Mammary epithelial cell (primary cell): ENCODE measurements at regions of chr5 and their contacts with region 1.

Region 1: DNA sequence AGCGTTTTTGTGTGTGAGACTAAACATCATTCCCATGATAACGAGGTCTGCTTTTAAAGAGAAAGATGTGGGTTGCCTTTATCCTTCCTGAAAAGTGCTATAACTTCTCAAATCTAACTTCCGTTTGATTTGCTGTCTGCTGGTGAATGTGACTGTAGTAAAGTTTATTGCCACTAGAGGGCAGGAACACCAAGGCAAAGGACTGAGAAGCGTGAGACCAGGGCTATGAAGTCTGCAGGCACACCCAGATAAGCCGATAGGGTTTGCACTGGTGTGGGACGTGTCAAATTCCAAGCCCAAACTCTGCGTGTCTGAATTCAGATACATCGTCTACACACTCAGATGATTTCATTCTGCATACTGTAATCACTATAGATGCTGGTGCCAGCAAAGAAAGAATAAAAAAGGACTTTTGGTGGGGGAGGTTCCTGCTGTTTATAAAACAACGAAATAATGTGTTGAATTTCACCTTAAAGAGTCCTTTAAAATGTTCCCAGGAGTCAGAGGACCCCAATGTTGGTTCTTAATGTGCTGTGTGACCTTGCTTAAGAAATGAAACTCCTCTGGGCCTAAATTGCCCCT is 87.2 kb downstream of the PTTG1 start:
- DNase-seq: peak; percentile 71
- H3K4me3 ChIP-seq: no peak overlapping the region
- H3K27ac ChIP-seq: no peak overlapping the region
- H3K4me1 ChIP-seq: peaks cover 8% of the 10 kb centered on the region
- H3K27me3 ChIP-seq: no peaks in the 10 kb centered on the region
- CTCF ChIP-seq: peak; percentile 66 to 77

Region 2: GRCh38 chr5:160001457-160001856 is 507.4 kb before region 1 on chr5:
- CTCF ChIA-PET with region 1: no interaction called
- dilution Hi-C with region 1: no loop called
- in situ Hi-C with region 1: no loop called
- intact Hi-C with region 1: no loop called
- DNase-seq: no peak
- H3K4me3 ChIP-seq: no peak overlapping the region
- H3K27ac ChIP-seq: no peak overlapping the region
- H3K4me1 ChIP-seq: no peaks in the 10 kb centered on the region
- H3K27me3 ChIP-seq: peaks cover 3% of the 10 kb centered on the region
- CTCF ChIP-seq: no peak

Region 3: DNA sequence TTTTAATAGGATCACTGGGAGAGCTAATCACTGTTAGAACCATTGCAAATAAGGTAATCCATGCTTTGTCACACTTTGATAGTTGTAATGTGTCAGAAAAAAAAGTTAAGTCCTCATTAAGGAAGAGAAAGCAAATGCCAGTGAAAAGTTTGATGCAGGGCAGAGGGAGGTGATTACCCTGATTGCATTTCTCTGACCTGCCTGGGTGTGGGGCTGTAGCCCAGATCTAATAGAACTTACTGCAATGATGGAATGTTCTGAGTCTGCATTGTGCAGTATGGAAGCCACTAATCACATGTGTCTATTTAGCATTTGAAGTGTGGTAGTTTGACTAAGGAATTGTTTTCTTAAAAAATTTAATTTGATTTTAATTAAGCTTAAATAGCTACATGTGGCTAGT is 140.4 kb after region 1 on chr5:
- CTCF ChIA-PET with region 1: no interaction called
- dilution Hi-C with region 1: no loop called
- in situ Hi-C with region 1: no loop called
- intact Hi-C with region 1: loop called (anchors 10 kb)
- DNase-seq: peak; percentile 16
- H3K4me3 ChIP-seq: no peak overlapping the region
- H3K27ac ChIP-seq: no peak overlapping the region
- H3K4me1 ChIP-seq: no peaks in the 10 kb centered on the region
- H3K27me3 ChIP-seq: no peaks in the 10 kb centered on the region
- CTCF ChIP-seq: peak; percentile 44 to 58

Region 4: DNA sequence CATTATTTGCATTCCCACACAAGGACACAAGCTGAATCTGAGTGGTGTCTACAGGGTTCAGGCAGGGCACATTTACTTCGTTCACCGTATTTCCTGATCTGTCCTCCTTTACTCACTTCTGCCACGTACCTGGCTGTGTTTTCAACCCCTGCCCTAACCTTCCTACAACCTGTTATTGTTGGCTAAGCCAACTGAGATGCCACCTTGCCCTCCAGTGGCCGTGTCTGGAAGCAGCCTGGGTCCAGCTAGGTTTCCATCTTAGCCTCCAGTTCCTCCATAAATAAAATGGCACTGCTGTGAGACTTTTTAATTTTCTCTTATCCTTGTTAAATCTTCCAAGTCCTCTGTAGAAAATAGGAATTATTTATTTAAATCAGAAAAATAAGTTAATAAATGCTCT is 278.4 kb after region 1 on chr5:
- CTCF ChIA-PET with region 1: no interaction called
- dilution Hi-C with region 1: no loop called
- in situ Hi-C with region 1: loop called (anchors 10 to 25 kb)
- intact Hi-C with region 1: loop called (anchors 1 kb)
- DNase-seq: peak; percentile 40
- H3K4me3 ChIP-seq: no peak overlapping the region
- H3K27ac ChIP-seq: no peak overlapping the region
- H3K4me1 ChIP-seq: no peaks in the 10 kb centered on the region
- H3K27me3 ChIP-seq: no peaks in the 10 kb centered on the region
- CTCF ChIP-seq: peak; percentile 61 to 77

Region 5: DNA sequence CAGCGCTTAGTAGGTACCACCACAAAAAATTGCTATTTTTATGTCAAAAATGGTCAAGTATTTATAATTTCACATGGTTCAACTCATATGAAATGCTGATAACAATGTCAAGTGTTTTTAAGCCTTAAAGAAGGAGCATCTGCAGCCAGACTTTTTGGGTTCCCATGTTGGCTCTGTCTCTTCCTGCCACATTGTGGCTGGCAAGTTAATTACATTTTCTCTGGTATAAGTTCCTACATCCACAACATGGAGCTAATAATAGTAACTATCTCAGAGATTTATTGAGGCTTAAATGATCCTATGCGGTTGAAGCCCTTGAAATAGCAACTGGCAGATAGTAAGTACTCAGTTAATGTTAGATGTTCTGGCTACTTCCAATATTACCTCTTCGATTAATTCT is 337.8 kb after region 1 on chr5:
- CTCF ChIA-PET with region 1: no interaction called
- dilution Hi-C with region 1: no loop called
- in situ Hi-C with region 1: no loop called
- intact Hi-C with region 1: loop called (anchors 1 kb)
- DNase-seq: no peak
- H3K4me3 ChIP-seq: no peak overlapping the region
- H3K27ac ChIP-seq: no peak overlapping the region
- H3K4me1 ChIP-seq: no peaks in the 10 kb centered on the region
- H3K27me3 ChIP-seq: no peaks in the 10 kb centered on the region
- CTCF ChIP-seq: peak in 1 of 2 donors; percentile 30

Region 6: DNA sequence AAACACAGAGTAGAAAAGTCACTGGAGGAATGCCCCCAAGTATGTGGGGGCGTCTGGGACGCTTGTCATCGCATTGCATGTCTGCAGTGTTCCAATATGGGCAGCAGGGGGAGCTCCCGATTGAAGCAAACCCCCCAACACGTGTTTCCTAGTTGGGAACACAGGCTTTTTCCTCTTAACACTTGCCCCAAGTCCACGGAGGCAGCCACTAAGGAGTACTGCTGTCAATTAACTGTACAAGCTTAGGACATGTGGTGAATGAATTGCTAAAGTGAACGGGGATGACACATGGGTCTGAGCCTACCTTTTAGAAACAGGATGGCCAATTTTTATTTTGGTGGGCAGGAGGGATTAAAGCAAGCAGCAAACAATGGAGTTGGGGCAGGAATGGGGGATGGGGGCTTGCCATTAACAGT is 1035.5 kb after region 1 on chr5:
- CTCF ChIA-PET with region 1: no interaction called
- dilution Hi-C with region 1: no loop called
- in situ Hi-C with region 1: no loop called
- intact Hi-C with region 1: loop called (anchors 10 kb)
- DNase-seq: peak; percentile 5
- H3K4me3 ChIP-seq: no peak overlapping the region
- H3K27ac ChIP-seq: no peak overlapping the region
- H3K4me1 ChIP-seq: peaks cover 4% of the 10 kb centered on the region
- H3K27me3 ChIP-seq: peaks cover 26% of the 10 kb centered on the region
- CTCF ChIP-seq: peak; percentile 79 to 87